Transverse colon (tissue), 4 donors: ENCODE measurements at regions of chr6 and their contacts with region 1.

Region 1: GRCh38 chr6:1406306-1407072 is 17.1 kb downstream of the FOXF2 start:
- DNase-seq: no peak
- H3K4me3 ChIP-seq: no peak overlapping the region
- H3K27ac ChIP-seq: peak overlapping the region; percentile 50 to 69 (median 56)
- H3K4me1 ChIP-seq: peaks cover 0 to 9% (median 0%) of the 10 kb centered on the region in 4 donors
- H3K27me3 ChIP-seq: peaks cover 17% of the 10 kb centered on the region
- CTCF ChIP-seq: no peak
- EP300 ChIP-seq: no peak
- POLR2A ChIP-seq: no peak

Region 2: DNA sequence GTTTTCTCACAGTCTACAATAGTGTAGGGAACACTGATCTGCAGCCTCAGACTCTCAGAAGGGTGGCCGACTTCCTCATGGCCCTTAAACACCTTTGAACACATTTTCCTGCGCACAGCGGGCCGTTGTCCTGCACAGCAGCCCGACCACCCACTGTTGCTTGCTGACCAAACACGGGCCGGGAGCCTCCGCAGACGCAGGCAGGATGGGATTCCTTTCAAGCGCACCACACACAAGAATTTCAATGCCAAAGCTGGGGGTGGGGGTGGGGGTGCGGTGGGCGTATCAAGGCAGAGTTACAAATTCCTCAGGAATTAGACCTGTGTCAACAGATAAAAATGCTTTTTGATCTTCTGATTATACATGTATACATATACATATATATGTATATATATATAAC is 824.1 kb before region 1 on chr6:
- in situ Hi-C with region 1: loop called in 1 of 4 experiments (anchors 10 kb)
- intact Hi-C with region 1: no loop called
- DNase-seq: no peak
- H3K4me3 ChIP-seq: no peak overlapping the region
- H3K27ac ChIP-seq: peak overlapping the region; percentile 14 to 51 (median 27)
- H3K4me1 ChIP-seq: no peaks in the 10 kb centered on the region
- H3K27me3 ChIP-seq: no peaks in the 10 kb centered on the region
- CTCF ChIP-seq: no peak
- EP300 ChIP-seq: no peak
- POLR2A ChIP-seq: no peak

Region 3: GRCh38 chr6:1297746-1298145 is 108.7 kb before region 1 on chr6:
- in situ Hi-C with region 1: no loop called
- intact Hi-C with region 1: no loop called
- DNase-seq: no peak
- H3K4me3 ChIP-seq: no peak overlapping the region
- H3K27ac ChIP-seq: no peak overlapping the region
- H3K4me1 ChIP-seq: no peaks in the 10 kb centered on the region
- H3K27me3 ChIP-seq: peaks cover 4% of the 10 kb centered on the region
- CTCF ChIP-seq: no peak
- EP300 ChIP-seq: no peak
- POLR2A ChIP-seq: no peak